Upper lobe of right lung (tissue), 1 donor: ENCODE measurements at regions of chr21 and their contacts with region 1.

Region 1: DNA sequence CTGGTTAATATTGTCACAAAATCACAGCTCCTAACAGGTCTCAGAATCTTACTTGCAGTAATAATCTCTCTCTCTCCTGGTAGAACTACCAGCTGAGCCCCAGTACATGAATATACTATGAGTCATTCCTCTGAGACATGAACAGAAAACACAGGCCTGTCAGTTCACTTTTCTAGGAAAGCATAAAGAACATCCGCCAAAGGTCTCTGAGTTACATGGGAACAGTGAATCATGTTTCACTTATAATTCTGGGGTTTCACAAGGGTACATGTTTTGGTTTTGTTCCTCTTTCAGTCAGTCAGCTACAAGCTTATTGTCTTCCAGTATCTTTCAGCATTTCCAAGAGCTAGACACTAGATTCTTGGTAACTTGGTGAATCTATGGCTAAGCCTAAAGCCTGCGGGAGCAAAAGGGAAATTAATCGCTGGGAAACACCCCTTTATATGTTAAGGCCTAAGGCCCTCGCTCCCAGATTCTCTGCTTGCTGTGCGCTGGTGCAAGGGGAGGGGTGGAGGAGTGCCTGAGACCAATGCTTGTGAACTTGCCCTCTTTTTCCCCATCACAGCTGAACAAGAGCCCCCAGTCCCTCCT is 31.7 kb downstream of the IFNGR2 start:
- DNase-seq: no peak
- ATAC-seq: peak; percentile 83
- H3K4me3 ChIP-seq: no peak overlapping the region
- H3K27ac ChIP-seq: peak overlapping the region; percentile 68
- H3K4me1 ChIP-seq: no peaks in the 10 kb centered on the region
- H3K27me3 ChIP-seq: no peaks in the 10 kb centered on the region
- CTCF ChIP-seq: no peak

Region 2: DNA sequence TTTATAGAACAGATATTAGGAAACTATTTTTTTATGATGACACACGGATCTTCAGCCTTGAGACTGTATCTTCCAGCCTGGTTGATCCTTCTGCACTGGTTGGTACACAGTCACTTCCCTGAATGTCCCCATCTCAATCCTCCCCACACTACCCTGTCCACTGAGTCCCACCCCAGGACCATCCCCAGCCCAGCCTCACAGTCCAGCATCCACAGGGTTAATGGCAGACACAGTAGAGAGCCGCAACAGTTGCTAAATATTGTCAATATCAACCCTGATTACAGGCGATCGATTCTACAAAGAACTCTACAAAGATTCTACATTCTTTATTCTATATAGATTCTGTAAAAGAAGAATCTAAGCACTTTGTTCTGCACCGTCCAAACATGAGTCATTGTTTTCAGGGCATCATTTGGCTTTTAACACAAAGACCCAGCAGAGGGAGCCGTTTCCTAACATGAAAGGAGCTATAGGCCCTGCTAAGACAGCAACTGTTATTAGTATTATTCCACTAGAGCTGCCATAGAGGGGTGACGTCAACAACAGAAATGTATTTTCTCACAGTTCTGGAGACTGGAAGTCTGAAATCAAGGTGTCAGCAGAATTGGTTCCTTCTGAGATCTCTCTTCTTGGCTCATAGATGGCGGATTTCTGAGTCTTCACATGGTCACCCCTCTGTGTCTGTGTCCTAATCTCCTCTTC is 235.2 kb before region 1 on chr21:
- intact Hi-C with region 1: loop called (anchors 10 kb)
- DNase-seq: no peak
- ATAC-seq: peak; percentile 75
- H3K4me3 ChIP-seq: no peak overlapping the region
- H3K27ac ChIP-seq: peak overlapping the region; percentile 73
- H3K4me1 ChIP-seq: peaks cover 41% of the 10 kb centered on the region
- H3K27me3 ChIP-seq: no peaks in the 10 kb centered on the region
- CTCF ChIP-seq: peak; percentile 79